AG04450 (cell line): ENCODE measurements at regions of chr3 and their contacts with region 1.

Region 1: GRCh38 chr3:128794770-128795649 is 69.0 kb downstream of the RAB7A start:
- DNase-seq: peak; percentile 16
- H3K4me3 ChIP-seq: no peak overlapping the region
- H3K27ac ChIP-seq: no peak overlapping the region
- H3K27me3 ChIP-seq: no peaks in the 10 kb centered on the region
- CTCF ChIP-seq: peak; percentile 79

Region 2: DNA sequence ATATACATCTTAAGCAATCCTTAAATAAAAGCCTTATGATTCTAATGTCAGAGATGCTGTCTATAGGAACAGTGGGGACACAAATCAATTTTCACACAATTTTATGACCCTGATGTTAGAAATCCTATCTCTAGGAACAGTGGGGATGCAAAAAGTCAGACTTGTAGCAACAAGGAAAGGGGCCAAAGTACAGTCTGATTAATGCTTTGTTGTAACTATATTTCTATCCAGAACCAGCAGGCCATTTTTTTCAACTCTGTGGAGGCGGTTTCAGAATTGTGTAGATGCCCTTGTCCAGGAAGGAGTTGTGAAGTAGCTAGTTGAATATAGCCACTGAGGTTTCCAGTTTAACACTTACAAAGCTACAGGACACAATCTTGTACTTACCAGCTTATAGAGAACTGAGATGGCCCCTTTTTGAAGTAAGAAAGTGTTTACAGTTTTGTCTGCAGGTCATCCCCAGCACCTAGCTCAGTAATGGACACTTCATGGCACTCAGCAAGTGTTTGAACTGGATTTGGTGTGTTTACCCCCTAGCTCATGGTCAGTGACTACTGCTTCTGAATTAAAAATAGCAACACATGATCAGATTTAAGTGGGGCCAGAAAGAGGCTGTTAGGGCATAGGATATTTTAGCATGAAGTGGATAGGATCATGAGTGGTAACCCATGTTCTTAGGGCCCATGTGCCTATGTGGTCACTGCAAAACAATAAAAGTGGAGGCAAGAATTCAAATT is 14.7 kb before region 1 on chr3:
- CTCF ChIA-PET with region 1: interaction called, 18 read pairs
- POLR2A ChIA-PET with region 1: no interaction called
- DNase-seq: no peak
- H3K4me3 ChIP-seq: no peak overlapping the region
- H3K27ac ChIP-seq: no peak overlapping the region
- H3K27me3 ChIP-seq: no peaks in the 10 kb centered on the region
- CTCF ChIP-seq: no peak

Region 3: GRCh38 chr3:129016720-129017483 is 221.9 kb after region 1 on chr3:
- CTCF ChIA-PET with region 1: no interaction called
- POLR2A ChIA-PET with region 1: no interaction called
- DNase-seq: no peak
- H3K4me3 ChIP-seq: no peak overlapping the region
- H3K27ac ChIP-seq: no peak overlapping the region
- H3K27me3 ChIP-seq: no peaks in the 10 kb centered on the region
- CTCF ChIP-seq: no peak